ENCODE measurements at regions of chr6 and their contacts with region 1.

Region 1: DNA sequence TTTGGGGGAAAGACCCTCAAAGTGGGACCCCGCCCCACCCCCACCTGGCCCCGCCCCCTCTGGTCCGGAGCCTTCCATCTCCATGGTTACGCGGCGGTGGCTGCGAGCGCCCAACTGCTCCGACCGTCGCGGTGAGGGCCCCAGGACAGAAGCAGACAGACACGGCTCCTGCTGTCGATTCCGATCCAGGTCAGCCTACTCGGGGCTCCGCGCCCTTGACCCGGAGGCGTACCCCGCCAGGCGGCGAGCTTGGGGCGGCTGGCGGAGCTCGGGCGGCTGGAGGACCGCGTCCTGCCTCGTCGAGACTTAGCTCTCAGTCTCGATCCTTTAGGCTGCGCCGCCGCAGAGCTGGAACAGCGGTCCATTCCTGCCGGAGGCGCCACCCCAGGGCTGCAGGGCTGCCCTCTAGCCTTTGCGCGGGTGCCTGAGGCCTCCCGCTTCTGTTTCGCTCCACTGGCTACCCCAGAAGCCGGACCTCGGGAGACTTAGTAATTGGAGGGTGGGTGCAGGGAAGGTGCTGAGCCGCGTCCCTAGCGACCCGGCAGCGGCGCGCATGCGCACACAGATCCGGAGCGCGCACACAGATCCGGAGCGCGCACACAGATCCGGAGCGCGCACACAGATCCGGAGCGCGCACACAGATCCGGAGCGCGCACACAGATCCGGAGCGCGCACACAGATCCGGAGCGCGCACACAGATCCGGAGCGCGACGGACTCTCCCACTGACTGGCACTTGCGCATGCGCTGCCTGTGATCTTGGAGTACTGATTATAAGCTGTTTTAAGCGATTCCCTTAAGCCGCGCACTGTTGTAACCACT is at the start of gene CFAP206:
- DNase-seq: peak; percentile 63 to 93 (median 77)
- ATAC-seq: peak; percentile 79
- H3K4me3 ChIP-seq: peak within 1 kb of the TSS; percentile 92
- H3K4me3 Mint-ChIP-seq: peak within 1 kb of the TSS; percentile 92
- H3K27ac ChIP-seq: peak within 1 kb of the TSS; percentile 58 to 59
- H3K27ac Mint-ChIP-seq: peak within 1 kb of the TSS; percentile 64
- H3K4me1 ChIP-seq: peaks cover 3% of the 10 kb centered on the region
- H3K4me1 Mint-ChIP-seq: peaks cover 7% of the 10 kb centered on the region
- H3K27me3 ChIP-seq: peaks cover 0 to 3% of the 10 kb centered on the region in 2 experiments
- H3K27me3 Mint-ChIP-seq: peaks cover 30% of the 10 kb centered on the region
- CTCF ChIP-seq: no peak
- total RNA-seq, gene CFAP206: 0.11 TPM in 1 of 2 experiments, not detected in the other

Region 2: DNA sequence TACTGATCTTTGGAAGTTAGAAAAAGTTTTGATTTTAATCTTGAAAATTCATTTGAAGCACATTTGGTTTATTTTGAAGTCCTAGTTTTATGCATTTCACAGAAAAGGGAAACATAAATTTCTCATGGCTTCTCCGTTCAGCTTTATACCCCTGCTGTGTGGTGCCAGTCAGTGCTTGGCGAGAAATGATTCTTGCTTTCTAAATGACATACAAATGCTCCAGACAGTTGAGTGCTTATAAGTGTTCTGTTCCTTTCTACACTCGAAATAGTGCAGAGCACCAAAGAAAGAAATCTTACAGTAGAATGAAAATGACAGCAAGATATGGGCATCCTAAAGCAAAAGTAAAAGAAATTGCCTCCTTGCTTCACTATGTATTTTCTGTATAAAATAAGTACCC is 261.7 kb before region 1 on chr6:
- CTCF ChIA-PET with region 1: no interaction called
- POLR2A ChIA-PET with region 1: no interaction called
- intact Hi-C with region 1: loop called (anchors 5 to 10 kb)
- DNase-seq: no peak
- ATAC-seq: no peak
- H3K4me3 ChIP-seq: no peak overlapping the region
- H3K4me3 Mint-ChIP-seq: no peak overlapping the region
- H3K27ac ChIP-seq: no peak overlapping the region
- H3K27ac Mint-ChIP-seq: no peak overlapping the region
- H3K4me1 ChIP-seq: peaks cover 2% of the 10 kb centered on the region
- H3K4me1 Mint-ChIP-seq: no peaks in the 10 kb centered on the region
- H3K27me3 ChIP-seq: no peaks in the 10 kb centered on the region
- H3K27me3 Mint-ChIP-seq: peaks cover 7% of the 10 kb centered on the region
- CTCF ChIP-seq: no peak

Region 3: GRCh38 chr6:87322304-87323212 is 85.6 kb before region 1 on chr6 and contains the start of gene SMIM8:
- CTCF ChIA-PET with region 1: no interaction called
- POLR2A ChIA-PET with region 1: interaction called, 3 read pairs
- intact Hi-C with region 1: loop called in 1 of 2 experiments (anchors 5 kb)
- DNase-seq: peak; percentile 75 to 89 (median 82)
- ATAC-seq: peak; percentile 98
- H3K4me3 ChIP-seq: peak within 1 kb of the TSS; percentile 73
- H3K4me3 Mint-ChIP-seq: peak within 1 kb of the TSS; percentile 92
- H3K27ac ChIP-seq: peak within 1 kb of the TSS; percentile 14 to 52
- H3K27ac Mint-ChIP-seq: peak within 1 kb of the TSS; percentile 67
- H3K4me1 ChIP-seq: peaks cover 9% of the 10 kb centered on the region
- H3K4me1 Mint-ChIP-seq: peaks cover 21% of the 10 kb centered on the region
- H3K27me3 ChIP-seq: no peaks in the 10 kb centered on the region
- H3K27me3 Mint-ChIP-seq: no peaks in the 10 kb centered on the region
- CTCF ChIP-seq: peak; percentile 97
- total RNA-seq, gene SMIM8: 5.4 TPM

Region 4: GRCh38 chr6:87589693-87590549 is 181.8 kb after region 1 on chr6 and contains the starts of genes ORC3 and RARS2:
- CTCF ChIA-PET with region 1: no interaction called
- POLR2A ChIA-PET with region 1: interaction called, 9 read pairs
- intact Hi-C with region 1: loop called in 1 of 2 experiments (anchors 5 kb)
- DNase-seq: peak; percentile 88 to 96 (median 92)
- ATAC-seq: peak; percentile 98
- H3K4me3 ChIP-seq: peak within 1 kb of the TSS; percentile 68
- H3K4me3 Mint-ChIP-seq: peak within 1 kb of the TSS; percentile 89
- H3K27ac ChIP-seq: peak within 1 kb of the TSS; percentile 76 to 80
- H3K27ac Mint-ChIP-seq: peak within 1 kb of the TSS; percentile 87
- H3K4me1 ChIP-seq: peaks cover 37% of the 10 kb centered on the region
- H3K4me1 Mint-ChIP-seq: peaks cover 74% of the 10 kb centered on the region
- H3K27me3 ChIP-seq: no peaks in the 10 kb centered on the region
- H3K27me3 Mint-ChIP-seq: no peaks in the 10 kb centered on the region
- CTCF ChIP-seq: no peak
- total RNA-seq, gene ORC3: 12.1 to 12.9 TPM
- total RNA-seq, gene RARS2: 21.9 to 22.4 TPM

Region 5: DNA sequence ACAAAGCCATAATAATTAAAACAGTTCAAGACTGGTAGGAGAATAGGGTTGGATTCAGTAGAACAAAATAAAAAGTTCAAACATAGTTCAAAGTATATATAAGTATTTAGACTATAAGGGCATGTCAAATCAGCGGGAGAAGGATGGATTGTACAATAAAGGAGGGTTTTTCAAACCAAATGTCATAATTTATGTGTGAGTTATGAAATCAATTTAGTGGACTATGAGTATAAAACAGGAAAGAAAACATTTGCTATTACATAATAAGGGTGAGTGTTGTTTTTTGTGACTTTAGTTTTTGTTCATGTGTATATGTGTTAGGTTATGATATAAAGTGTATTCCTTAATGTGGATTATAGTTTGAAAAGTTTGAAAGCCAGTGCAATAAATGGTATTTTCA is 192.5 kb after region 1 on chr6:
- CTCF ChIA-PET with region 1: no interaction called
- POLR2A ChIA-PET with region 1: no interaction called
- intact Hi-C with region 1: no loop called
- DNase-seq: no peak
- ATAC-seq: no peak
- H3K4me3 ChIP-seq: no peak overlapping the region
- H3K4me3 Mint-ChIP-seq: no peak overlapping the region
- H3K27ac ChIP-seq: no peak overlapping the region
- H3K27ac Mint-ChIP-seq: no peak overlapping the region
- H3K4me1 ChIP-seq: no peaks in the 10 kb centered on the region
- H3K4me1 Mint-ChIP-seq: no peaks in the 10 kb centered on the region
- H3K27me3 ChIP-seq: no peaks in the 10 kb centered on the region
- H3K27me3 Mint-ChIP-seq: no peaks in the 10 kb centered on the region
- CTCF ChIP-seq: no peak

Region 6: GRCh38 chr6:87832025-87832825 is 424.1 kb after region 1 on chr6:
- CTCF ChIA-PET with region 1: no interaction called
- POLR2A ChIA-PET with region 1: no interaction called
- intact Hi-C with region 1: loop called in 1 of 2 experiments (anchors 10 kb)
- DNase-seq: peak in 4 of 14 experiments; percentile 5 to 54 (median 48)
- ATAC-seq: peak; percentile 61
- H3K4me3 ChIP-seq: peak overlapping the region; percentile 60
- H3K4me3 Mint-ChIP-seq: peak overlapping the region; percentile 90
- H3K27ac ChIP-seq: peak overlapping the region in 1 of 2 donors; percentile 67
- H3K27ac Mint-ChIP-seq: peak overlapping the region; percentile 74
- H3K4me1 ChIP-seq: peaks cover 5% of the 10 kb centered on the region
- H3K4me1 Mint-ChIP-seq: peaks cover 13% of the 10 kb centered on the region
- H3K27me3 ChIP-seq: no peaks in the 10 kb centered on the region
- H3K27me3 Mint-ChIP-seq: no peaks in the 10 kb centered on the region
- CTCF ChIP-seq: peak; percentile 49